Astrocyte of the cerebellum (primary cell): ENCODE measurements at regions of chr7 and their contacts with region 1.

Region 1: DNA sequence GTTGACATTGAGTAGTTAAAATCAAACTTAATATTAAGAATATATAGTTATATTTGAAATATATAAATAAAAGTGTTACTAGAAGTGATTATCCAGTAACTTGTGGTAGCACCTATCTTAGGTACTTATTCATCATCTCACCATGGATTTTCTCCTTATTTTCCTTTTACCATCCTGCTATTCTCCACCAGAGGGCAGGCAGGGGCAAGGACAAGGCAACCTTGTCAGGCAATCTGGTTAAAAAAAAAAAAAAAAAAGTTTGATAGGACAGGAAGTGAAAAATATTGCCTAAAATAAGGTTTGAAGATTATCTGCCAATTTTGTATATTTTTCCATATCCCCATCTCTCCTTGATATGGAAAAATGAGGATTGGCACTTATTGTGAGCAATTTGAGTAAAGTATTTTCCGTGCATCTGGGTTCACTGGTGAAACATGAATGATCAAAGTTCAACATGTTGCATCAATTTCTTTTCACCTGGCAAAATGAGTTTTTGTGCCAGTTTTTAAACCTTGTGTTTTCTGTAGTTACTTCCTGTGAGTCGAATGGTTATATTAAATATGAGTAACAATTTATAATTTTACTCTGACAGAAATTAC is 256.7 kb downstream of the AGMO start:
- DNase-seq: peak; percentile 26
- H3K4me3 ChIP-seq: no peak overlapping the region
- CTCF ChIP-seq: peak; percentile 90

Region 2: DNA sequence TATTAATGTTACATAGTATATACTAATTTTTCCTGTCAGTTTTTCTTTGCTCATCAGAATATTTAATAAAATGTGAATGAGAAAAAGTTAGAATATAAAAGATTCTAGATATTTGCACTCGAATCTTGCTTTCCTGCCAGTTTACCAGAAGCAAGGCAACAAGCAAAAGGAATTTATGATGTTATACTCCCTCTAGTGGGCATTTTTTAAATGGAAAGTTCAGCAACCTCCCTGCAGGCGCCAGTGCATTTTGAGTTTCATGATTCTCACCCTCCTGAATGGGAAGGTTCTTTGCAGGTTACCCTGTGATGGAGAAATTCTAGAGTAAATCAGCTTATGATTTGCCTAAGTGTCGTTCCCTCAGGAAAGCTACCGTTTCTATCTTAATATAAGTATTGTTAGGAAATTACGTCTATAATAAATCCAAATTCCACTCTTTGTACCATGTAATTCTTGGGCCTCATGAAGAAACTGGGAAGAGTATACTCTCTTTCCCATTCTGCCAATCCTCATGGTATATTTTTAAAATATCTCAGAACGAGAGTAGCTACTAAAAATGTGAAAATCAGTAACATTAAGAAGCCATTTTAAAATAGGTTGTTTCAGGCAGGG is 766.3 kb after region 1 on chr7:
- in situ Hi-C with region 1: loop called (anchors 25 kb)
- DNase-seq: peak; percentile 60
- H3K4me3 ChIP-seq: no peak overlapping the region
- CTCF ChIP-seq: peak; percentile 60